ENCODE measurements at regions of chr5 and their contacts with region 1.

Region 1: GRCh38 chr5:95113489-95113888 is 171.4 kb downstream of the MCTP1 start:
- DNase-seq: no peak

Region 2: GRCh38 chr5:95043234-95043633 is 70.3 kb before region 1 on chr5:
- intact Hi-C with region 1: no loop called
- DNase-seq: no peak

Region 3: GRCh38 chr5:95068289-95068910 is 45.1 kb before region 1 on chr5:
- intact Hi-C with region 1: no loop called
- DNase-seq: no peak

Region 4: DNA sequence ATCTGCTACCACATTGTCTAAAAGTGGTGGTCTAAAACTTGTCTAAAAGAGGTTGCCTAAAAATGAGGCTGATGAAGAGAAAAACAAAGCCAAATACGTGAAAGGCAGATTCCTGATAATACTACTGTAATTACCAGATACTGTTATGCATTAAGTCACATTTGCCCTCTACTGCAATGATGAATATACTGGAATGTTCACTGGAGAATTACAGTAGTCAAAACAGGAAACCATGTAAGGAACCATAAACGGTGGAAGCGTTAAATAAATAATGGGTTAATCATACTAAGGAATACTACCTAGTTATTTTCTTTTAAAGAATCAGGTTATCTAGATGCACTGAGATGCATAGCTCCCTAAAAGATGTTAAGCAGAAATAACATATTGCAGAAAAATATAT is 29.9 kb before region 1 on chr5:
- intact Hi-C with region 1: loop called in 1 of 2 experiments (anchors 2 kb)
- DNase-seq: no peak

Region 5: DNA sequence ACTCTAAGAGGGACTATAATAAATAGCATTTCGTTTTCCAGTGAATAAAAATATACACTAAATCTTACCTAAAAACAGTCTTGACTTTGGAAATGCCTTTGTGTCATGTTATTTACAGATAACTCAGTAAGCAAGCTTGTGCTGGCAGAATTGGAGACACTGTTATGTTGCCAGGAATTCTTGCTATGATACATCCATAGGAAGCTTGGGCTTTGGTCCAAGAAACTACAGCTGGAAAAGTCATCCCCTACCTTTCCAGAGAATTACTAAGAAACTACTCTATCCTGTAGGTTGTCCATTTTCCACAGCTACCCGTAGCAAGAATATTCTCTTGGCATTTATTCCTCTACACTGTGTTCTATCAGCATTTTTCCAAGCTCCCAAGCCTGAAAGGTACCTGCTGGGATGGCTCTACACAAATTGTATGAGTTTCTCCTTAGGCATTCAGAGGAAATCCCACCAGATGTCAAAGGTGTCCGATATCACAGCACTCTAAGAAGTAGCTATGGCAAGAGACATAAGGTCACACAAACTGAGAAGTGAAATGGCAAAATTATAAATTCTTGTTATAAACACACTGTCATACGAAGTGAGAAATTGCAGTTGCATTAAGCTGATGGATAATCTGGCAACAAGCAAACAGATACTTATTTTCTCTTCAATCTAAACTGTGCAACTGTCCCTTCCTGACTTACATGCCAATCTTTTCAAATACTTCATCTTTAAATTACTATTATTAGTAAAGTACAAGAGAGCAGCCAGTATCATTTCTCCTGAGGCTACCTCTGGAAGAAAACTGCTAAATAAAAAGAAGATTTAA is 102.9 kb after region 1 on chr5:
- intact Hi-C with region 1: no loop called
- DNase-seq: no peak

Region 6: DNA sequence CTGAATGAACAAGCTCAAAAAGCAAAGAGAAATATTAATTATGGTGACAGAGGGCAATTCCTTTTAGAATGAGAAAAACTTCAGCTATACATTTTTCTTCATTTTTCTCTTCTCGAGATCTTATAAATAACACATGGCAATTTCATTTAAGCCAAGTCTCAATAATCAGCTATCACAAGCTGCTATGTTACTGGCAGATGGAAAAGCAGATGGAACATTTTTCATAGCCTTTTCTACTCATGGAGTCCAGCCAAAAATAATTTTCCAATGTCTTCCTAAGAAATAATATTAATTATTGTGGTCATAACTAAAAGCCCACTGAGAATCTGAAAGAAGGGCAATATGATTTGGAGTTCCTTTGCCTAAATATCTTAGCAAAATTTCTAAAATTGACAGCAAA is 405.7 kb after region 1 on chr5:
- intact Hi-C with region 1: no loop called
- DNase-seq: no peak

Measured in posterior vena cava (tissue), 2 donors.